ENCODE measurements at regions of chr5 and their contacts with region 1.

Region 1: DNA sequence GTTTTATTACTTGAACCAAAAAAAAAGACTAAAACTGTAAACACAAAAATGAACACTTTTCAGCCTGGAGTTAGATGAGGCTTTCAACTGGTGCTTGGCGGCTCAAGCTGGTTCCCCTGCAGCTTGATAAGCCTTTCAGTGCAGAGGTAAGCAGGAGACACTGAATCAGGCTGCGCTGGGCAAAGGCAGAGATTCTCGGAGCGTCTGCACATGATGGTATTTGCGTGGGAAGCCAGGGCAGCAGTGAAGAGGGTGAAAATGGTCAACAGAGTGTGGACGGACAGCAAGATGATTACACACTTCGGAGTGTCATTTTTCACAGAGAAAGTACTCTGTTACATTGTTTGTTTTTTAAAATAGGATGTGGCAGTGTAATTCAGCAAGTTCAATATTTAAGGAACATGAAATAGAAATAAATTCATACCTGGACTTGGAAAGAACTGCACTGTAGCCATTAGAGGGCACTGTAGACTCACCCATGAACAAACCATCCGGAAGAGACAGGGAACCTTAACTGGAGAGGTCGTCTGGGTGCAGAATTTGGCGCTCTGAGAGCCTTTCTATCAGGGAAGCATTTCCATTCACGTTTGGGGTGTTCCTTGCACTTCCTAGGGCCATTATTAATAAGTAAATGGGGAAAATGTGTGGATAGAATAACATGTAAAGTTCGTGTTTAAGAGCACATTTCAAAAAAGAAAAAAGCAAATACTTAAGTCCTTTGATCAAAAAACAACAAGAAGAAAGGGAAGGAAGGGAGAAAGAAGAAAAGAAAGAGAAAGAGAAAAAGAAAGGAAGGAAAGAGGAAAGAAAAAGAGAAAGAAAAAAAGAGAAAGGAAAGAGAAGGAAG is 69.8 kb downstream of the ICE1 start:
- DNase-seq: no peak
- ATAC-seq: peak in 1 of 2 donors; percentile 28

Region 2: GRCh38 chr5:4758550-4758949 is 733.8 kb before region 1 on chr5:
- intact Hi-C with region 1: no loop called
- DNase-seq: no peak
- ATAC-seq: peak in 1 of 2 donors; percentile 60

Region 3: DNA sequence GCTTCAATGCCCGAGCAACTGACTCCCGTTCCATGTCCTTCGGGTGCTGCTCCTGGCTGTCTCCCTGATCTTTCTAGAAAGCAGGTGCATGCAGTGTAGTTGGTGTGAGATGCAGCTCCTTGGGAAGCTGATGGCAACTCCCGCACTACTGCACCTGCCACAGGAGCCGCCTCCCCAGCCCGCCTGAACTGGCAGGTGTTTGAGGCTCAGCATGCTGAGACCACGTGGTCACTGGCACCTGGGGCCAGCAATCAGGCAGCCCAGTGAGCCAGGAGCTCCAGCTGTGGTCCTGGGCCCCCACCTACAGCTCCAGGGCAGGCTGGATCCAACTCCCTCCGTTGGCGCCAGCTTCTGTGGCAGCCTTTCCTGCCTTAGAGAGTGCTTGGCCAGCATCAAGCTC is 41.6 kb after region 1 on chr5:
- intact Hi-C with region 1: no loop called
- DNase-seq: no peak
- ATAC-seq: no peak

Region 4: GRCh38 chr5:5650240-5650639 is 157.9 kb after region 1 on chr5:
- intact Hi-C with region 1: no loop called
- DNase-seq: no peak
- ATAC-seq: no peak

Region 5: GRCh38 chr5:5795074-5795771 is 302.9 kb after region 1 on chr5:
- intact Hi-C with region 1: loop called in 1 of 2 experiments (anchors 10 kb)
- DNase-seq: peak; percentile 76
- ATAC-seq: peak; percentile 91 to 97

Region 6: GRCh38 chr5:5886812-5887486 is 394.6 kb after region 1 on chr5:
- intact Hi-C with region 1: loop called in 1 of 2 experiments (anchors 10 kb)
- DNase-seq: no peak
- ATAC-seq: peak in 1 of 2 donors; percentile 45

Region 7: DNA sequence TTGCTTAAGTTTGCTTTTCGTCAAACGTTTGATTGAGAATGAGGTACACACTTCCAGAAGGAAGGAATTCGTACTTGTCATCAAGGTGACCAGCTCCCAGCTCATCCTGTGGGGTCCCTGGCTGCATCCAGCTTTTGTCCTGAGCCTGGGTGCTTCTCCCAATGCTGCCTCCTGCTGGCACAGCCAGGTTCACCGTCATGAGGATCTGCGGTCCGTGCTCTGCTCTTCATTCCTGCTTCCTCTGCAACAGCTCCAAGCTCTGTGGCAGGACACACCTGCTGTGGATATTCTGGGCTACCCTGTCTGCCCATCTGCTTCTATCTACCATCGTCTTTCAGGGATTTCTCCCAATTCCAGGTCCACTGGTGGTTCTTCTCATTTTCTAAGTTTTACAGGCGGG is 943.0 kb after region 1 on chr5:
- intact Hi-C with region 1: loop called in 1 of 2 experiments (anchors 10 kb)
- DNase-seq: no peak
- ATAC-seq: no peak

Region 8: GRCh38 chr5:6525910-6526309 is 1033.6 kb after region 1 on chr5:
- intact Hi-C with region 1: loop called (anchors 5 to 10 kb)
- DNase-seq: no peak
- ATAC-seq: peak; percentile 53 to 60

Region 9: GRCh38 chr5:6576861-6577501 is 1084.7 kb after region 1 on chr5:
- intact Hi-C with region 1: loop called in 1 of 2 experiments (anchors 10 kb)
- DNase-seq: no peak
- ATAC-seq: peak; percentile 31 to 51

Region 10: DNA sequence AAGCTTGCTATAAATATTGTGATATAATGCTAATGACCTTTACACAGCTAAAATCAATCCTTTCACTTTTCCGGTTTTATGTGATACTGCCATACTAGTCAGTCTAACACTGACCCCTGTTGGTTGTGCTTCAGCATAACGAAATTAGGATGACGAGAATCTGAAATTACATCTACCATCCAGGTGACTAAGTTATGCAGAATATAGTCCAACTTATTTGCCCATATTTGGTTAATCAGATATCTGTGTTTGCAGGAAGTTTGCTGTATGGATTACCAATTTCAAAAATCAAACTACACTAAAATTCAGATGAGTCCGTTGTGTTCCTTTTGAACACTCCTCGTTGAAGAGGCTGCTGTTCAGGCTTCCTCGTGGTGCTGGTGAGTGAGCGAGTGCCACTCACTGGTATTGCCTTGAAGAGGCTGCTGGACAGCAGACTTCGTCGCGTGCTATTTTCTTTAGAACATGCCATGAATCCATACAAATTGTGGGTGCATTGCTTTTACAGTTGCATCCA is 1253.5 kb after region 1 on chr5:
- intact Hi-C with region 1: loop called in 1 of 2 experiments (anchors 10 kb)
- DNase-seq: no peak
- ATAC-seq: peak; percentile 62 to 67

Measured in left cardiac atrium (tissue), 4 donors.